A549 (cell line): ENCODE measurements at regions of chr3 and their contacts with region 1.

Region 1: DNA sequence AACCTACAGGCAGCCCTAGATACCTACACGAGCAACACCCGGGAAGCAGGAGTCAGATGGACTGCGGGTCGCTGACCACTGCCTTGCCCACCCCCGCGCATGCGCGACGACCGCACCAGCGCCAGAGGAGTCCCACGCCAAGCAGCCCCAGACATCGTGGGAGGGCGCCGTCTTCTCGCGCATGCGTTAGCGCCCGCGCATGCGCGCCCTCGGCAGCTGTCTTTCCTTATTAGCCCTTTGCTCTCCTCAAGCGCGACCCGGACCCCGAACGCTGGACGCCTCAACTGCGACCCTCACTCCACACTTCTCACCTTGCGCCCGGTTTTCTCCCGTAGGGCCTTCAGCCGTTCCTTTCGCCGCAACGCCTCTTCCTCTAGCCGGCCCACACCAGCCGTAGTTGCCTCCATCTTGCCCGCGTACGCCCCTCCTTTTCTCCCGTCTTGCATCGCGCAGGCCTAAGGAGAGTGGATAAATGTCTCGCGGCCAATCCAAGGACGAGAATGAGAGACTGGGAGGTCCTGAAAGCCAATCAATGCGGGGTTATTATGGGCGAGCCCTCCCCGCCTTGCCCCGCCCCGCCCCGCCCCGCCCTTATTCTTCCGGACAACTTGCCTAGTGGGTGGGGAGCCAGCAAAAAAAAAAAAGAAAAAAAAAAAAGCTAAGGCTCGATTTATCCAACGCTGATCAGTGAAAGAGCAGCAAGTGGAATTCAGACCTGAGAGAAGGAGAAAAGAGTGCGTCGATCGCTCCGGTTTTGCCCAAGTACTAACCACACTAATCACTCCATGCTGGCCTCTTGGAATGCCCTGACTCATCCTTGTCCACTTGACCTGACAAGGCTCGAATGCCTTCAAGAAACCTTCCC is at the start of gene CCDC12:
- DNase-seq: peak; percentile 95 to 97
- ATAC-seq: peak; percentile 72 to 92
- H3K4me3 ChIP-seq: peak within 1 kb of the TSS; percentile 74
- H3K27ac ChIP-seq: peak within 1 kb of the TSS; percentile 91 to 97
- H3K4me1 ChIP-seq: peaks cover 51% of the 10 kb centered on the region
- CTCF ChIP-seq: no peak
- EP300 ChIP-seq: no peak
- POLR2A ChIP-seq: peak; percentile 37; the same call in 1 of the 2 replicates
- RAD21 ChIP-seq: no peak
- polyA plus RNA-seq, gene CCDC12: 21.7 and 34.8 TPM in 2 replicates

Region 2: DNA sequence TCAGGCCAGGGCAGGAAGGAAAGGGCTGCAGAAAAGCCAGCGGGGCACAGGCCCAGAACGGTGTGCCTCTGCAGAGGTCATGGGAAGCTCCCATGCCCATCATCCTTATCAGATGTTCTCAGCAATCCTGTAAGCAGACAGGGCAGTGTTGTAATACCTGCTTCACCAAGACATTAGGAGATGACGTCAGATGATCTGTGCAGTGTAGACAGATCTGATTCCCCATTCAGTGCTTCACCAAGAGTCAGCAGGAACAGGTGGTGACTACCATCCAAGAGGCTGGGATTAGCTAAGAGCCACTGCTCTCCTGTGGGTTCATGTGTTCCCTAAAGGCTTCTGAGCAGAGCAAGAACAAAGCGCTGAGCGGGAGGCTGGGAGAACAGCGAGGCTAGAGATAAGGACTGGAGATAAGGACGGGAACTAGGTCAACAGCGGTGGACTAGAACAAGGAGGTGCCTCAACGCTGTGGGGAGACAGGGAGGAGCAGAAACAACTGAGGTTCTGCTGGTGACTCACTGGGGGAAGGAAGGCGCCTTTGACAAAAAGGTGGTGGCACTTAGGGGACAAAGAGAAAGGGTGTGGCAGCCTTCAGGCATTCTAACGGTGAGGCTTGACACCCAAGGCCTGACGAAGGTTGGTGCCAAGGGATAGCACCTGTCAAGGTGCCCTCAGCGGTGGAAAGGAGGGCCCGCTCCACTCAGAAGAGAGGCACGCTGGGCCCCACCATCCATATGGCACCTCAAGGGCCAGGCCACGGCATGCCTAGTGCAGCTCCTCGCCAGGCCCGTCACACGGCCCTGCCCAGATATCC is 28.4 kb before region 1 on chr3:
- CTCF ChIA-PET with region 1: interaction called, 3 read pairs
- POLR2A ChIA-PET with region 1: interaction called, 19 read pairs
- DNase-seq: peak; percentile 55 to 89
- ATAC-seq: peak; percentile 72 to 76
- H3K4me3 ChIP-seq: no peak overlapping the region
- H3K27ac ChIP-seq: peak overlapping the region; percentile 90 to 97
- H3K4me1 ChIP-seq: peaks cover 85% of the 10 kb centered on the region
- CTCF ChIP-seq: no peak
- EP300 ChIP-seq: peak in 1 of 2 experiments; percentile 48; a peak in 2 of 5 replicates
- POLR2A ChIP-seq: no peak
- RAD21 ChIP-seq: no peak; a peak in 1 of 5 replicates

Region 3: GRCh38 chr3:47380601-47381316 is 404.2 kb after region 1 on chr3 and contains the start of gene PTPN23:
- CTCF ChIA-PET with region 1: no interaction called
- POLR2A ChIA-PET with region 1: interaction called, 16 read pairs
- DNase-seq: peak; percentile 93 to 97
- ATAC-seq: peak; percentile 87 to 91
- H3K4me3 ChIP-seq: peak within 1 kb of the TSS; percentile 79
- H3K27ac ChIP-seq: peak within 1 kb of the TSS; percentile 94 to 99
- H3K4me1 ChIP-seq: peaks cover 12% of the 10 kb centered on the region
- CTCF ChIP-seq: no peak
- EP300 ChIP-seq: no peak
- POLR2A ChIP-seq: peak; percentile 75
- RAD21 ChIP-seq: no peak
- polyA plus RNA-seq, gene PTPN23: 1.5 and 3.1 TPM in 2 replicates